Ovary (tissue), 10 donors: ENCODE measurements at regions of chr2 and their contacts with region 1.

Region 1: DNA sequence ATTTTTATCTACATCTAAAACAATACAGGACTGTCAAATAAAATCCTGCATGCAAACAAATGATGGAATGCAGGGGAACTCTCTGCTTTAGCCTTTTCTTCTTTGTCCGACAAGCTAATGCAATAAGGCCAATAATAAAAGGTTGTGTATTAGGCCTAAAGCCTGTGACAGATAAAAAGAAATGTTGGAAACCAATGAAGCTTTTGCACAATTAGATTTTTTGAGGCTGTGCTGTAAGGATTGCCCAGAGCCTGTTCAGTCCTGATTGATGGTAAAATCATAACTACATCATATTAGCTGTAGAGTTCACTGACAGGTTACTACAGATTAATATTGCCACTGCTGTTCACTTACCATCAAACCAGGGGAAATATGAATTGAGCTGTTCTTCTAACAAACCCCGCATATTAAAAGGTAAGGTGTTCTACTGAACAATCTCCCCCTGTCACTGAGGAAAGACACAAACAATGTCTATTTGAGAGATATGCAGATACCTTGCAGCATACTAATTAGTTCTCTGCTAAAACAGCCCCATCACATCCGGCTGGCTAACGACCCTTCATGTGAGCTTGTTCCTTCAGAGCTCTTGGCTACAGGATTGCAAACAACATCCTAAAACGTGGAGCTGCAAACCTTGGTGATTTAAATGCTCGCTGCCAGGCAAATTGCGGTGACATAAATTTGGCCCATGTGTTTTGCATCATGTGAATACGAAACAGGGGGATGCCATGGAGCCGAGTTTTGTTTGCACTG is 305.4 kb downstream of the MTX2 start:
- DNase-seq: no peak
- H3K4me3 ChIP-seq: no peak overlapping the region
- H3K27ac ChIP-seq: no peak overlapping the region
- H3K4me1 ChIP-seq: no peaks in the 10 kb centered on the region
- H3K27me3 ChIP-seq: no peaks in the 10 kb centered on the region
- CTCF ChIP-seq: no peak
- EP300 ChIP-seq: no peak
- POLR2A ChIP-seq: no peak

Region 2: DNA sequence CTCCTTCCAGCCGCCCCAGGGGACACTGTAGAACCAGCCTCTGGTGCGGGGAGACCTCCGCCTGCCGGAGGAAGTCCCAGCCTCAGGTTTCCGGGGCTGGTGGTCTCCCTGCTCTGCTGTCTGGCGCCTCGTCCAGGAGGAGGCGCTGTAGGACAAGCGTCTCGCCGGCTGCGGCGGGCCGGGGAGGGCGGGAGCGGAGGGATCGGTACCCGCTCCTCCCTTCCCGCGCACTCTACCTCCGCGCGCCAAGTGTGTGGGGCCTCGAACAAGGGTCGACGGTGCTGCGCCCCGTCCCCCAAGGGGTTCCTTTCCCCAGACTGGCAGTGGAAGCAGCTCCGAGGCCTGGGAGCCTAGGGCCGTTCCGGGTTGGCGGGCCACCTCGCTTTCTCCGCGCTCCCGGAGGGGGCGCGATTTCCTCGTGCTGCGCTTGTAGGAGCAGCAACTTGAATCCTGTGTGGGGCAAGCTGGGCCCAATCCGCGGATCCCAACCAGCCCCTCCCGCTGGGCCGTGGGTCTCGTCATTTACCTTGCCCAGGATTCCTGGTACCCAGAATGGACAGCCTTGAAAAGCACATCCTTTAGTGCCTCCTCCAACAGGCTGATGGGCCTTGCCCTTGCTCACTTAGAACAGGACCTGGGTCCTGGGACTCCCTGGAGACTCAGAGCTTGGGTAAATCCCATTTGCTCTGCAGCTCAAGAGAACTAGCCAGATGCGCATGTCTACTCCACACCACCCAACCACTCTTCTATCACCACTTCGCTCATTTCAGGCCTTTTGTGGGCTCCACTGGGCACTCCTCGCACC is 433.9 kb before region 1 on chr2:
- intact Hi-C with region 1: no loop called
- DNase-seq: peak; percentile 84 to 90 (median 90)
- H3K4me3 ChIP-seq: peak overlapping the region; percentile 53
- H3K27ac ChIP-seq: peak overlapping the region; percentile 80 to 99
- H3K4me1 ChIP-seq: peaks cover 9% of the 10 kb centered on the region
- H3K27me3 ChIP-seq: no peaks in the 10 kb centered on the region
- CTCF ChIP-seq: peak; percentile 98 to 99 (median 98)
- EP300 ChIP-seq: no peak
- POLR2A ChIP-seq: no peak

Region 3: DNA sequence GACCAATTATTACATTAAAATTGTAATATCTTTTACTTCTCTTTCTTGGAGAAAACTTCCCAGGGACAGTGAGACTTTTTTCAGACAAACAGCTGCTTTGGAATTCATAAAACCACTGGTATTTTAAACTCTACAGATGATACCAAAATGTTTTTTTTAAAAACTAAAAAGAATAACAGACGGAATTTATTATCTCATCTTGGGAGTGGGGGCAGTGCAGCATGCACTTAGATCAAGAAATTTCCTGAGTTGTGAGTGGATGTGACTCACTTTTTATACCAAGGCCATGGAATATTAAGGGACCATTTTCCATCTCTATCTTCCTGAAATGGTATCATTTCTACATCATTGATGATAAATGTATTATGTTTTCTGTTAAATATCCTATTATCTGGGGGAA is 215.1 kb after region 1 on chr2:
- intact Hi-C with region 1: loop called in 1 of 4 experiments (anchors 10 kb)
- DNase-seq: no peak
- H3K4me3 ChIP-seq: no peak overlapping the region
- H3K27ac ChIP-seq: no peak overlapping the region
- H3K4me1 ChIP-seq: peaks cover 9% of the 10 kb centered on the region
- H3K27me3 ChIP-seq: no peaks in the 10 kb centered on the region
- CTCF ChIP-seq: no peak
- EP300 ChIP-seq: no peak
- POLR2A ChIP-seq: no peak